ENCODE measurements at regions of chr2 and their contacts with region 1.

Region 1: DNA sequence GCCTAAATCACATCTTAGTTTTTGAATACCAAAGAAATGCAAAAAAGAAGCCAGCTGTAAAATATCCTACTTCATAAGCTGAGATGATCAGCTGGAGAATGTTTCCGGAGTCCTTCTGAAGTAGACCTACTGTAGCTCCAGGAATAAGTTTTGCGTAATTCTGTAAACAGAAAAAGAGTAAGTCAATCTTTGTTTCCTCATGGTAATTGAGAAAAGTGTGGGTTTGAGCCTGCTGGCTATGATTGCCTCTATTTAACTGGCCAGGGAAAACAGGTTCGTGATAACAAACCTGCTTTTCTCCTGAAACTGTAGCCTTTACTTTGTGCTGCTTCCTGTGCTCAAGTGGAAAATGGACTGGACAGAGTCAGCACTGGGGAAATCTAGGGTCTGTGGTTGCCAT is 58.2 kb downstream of the ITGB6 start:
- DNase-seq: no peak
- H3K4me3 Mint-ChIP-seq: no peak overlapping the region
- H3K27ac Mint-ChIP-seq: no peak overlapping the region
- H3K4me1 Mint-ChIP-seq: peaks cover 23% of the 10 kb centered on the region
- H3K27me3 Mint-ChIP-seq: no peaks in the 10 kb centered on the region
- CTCF ChIP-seq: no peak

Region 2: DNA sequence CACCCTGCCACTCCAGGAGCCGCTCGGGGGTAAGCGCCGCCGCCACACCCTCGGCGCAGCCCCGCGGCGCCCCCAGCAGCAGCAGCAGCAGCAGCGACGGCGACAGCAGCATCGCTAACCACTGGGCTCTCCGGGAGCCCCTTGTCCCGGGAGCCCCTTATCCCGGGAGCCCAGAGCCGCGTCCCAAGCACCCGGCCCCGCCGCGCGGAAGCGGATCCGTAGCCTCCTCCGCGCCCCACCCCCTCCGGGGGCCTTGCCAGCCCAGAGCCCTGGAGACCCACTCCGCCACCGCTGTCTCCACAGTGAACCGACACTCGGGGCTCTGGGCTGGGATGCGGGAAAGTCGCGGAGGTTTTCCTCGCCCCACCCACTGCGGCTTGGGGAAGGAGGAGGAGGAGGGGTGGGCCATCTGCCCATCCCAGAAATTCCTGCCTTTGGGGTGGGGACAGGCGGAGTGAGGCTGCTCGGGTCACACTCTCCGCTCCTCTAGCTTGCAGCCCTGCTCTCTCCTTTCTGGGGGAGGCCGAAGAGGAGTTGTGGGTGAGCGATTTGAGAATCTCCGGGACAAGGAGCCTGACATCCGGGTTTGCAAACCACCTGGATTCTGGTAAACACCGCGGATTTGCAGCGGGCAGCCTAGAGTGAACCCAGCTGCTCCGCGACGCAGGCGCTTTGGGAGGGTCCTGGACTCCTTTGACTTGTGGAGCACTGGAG is 79.5 kb before region 1 on chr2 and contains the start of gene PLA2R1:
- CTCF ChIA-PET with region 1: no interaction called
- intact Hi-C with region 1: no loop called
- DNase-seq: peak; percentile 43
- H3K4me3 Mint-ChIP-seq: peak within 1 kb of the TSS; percentile 83
- H3K27ac Mint-ChIP-seq: peak within 1 kb of the TSS; percentile 71
- H3K4me1 Mint-ChIP-seq: peaks cover 36% of the 10 kb centered on the region
- H3K27me3 Mint-ChIP-seq: no peaks in the 10 kb centered on the region
- CTCF ChIP-seq: no peak
- total RNA-seq, gene PLA2R1: 5.1 and 5.8 TPM in 2 replicates

Region 3: GRCh38 chr2:160166002-160166401 is 24.1 kb after region 1 on chr2:
- CTCF ChIA-PET with region 1: no interaction called
- intact Hi-C with region 1: loop called (anchors 2 kb)
- DNase-seq: no peak
- H3K4me3 Mint-ChIP-seq: no peak overlapping the region
- H3K27ac Mint-ChIP-seq: no peak overlapping the region
- H3K4me1 Mint-ChIP-seq: peaks cover 38% of the 10 kb centered on the region
- H3K27me3 Mint-ChIP-seq: no peaks in the 10 kb centered on the region
- CTCF ChIP-seq: no peak

Region 4: DNA sequence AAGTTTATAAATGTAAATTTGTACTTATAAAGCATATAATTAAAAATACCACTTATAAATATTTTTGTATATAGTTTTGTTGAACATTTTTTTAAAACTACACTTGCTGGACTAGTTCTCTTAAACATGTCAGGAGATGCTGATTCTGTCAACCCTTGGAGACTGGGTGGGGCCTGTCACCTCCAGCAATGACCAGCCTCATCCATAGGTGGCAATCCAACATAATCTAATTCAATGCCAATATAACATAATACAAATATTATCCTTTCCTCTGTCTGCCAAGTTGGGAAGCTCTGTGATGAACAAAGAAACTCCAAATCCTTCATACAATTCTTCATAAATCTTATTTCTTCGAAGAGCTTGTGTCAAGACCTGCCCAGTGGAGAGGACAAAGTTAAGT is 211.3 kb after region 1 on chr2:
- CTCF ChIA-PET with region 1: no interaction called
- intact Hi-C with region 1: no loop called
- DNase-seq: peak; percentile 24
- H3K4me3 Mint-ChIP-seq: no peak overlapping the region
- H3K27ac Mint-ChIP-seq: no peak overlapping the region
- H3K4me1 Mint-ChIP-seq: peaks cover 51% of the 10 kb centered on the region
- H3K27me3 Mint-ChIP-seq: no peaks in the 10 kb centered on the region
- CTCF ChIP-seq: peak; percentile 36